ENCODE measurements at regions of chr9 and their contacts with region 1.

Region 1: DNA sequence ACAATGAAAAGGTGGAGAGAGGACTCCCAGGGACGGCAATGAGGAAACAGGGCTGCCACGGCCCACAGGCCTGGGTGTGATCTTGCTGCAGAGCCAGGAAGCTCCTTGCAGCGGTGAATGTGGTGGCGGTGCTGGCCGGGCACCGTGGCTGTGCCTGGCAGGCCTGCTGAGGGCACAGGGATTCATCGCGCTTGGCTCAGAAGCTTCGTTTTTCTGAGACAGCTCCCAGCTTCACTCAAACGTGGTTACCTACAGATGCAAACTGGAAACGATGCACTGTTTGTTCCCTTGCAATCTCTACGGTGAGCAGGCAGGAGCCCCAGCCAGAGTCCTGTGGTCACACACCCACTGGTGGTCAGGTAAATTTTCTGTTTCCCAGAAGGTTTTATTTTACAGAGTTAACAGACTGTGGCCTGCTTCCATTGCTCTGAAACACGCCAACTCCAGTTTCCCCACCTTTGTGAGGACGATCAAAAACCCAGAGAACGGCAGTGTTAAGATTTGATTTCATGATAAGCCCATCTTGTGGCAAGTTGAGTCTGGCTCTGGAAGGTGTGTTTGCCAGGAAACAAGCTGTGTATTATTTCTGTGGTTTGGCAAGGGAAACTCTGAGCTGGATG is 183.9 kb downstream of the AUH start:
- DNase-seq: peak; percentile 96
- H3K4me3 ChIP-seq: no peak overlapping the region
- H3K27ac ChIP-seq: peak overlapping the region; percentile 78
- H3K4me1 ChIP-seq: peaks cover 46% of the 10 kb centered on the region
- H3K27me3 ChIP-seq: no peaks in the 10 kb centered on the region
- CTCF ChIP-seq: no peak

Region 2: GRCh38 chr9:90985631-90986030 is 192.1 kb before region 1 on chr9:
- CTCF ChIA-PET with region 1: no interaction called
- dilution Hi-C with region 1: no loop called
- in situ Hi-C with region 1: no loop called
- intact Hi-C with region 1: loop called (anchors 5 kb)
- DNase-seq: peak; percentile 96
- H3K4me3 ChIP-seq: no peak overlapping the region
- H3K27ac ChIP-seq: peak overlapping the region; percentile 80
- H3K4me1 ChIP-seq: peaks cover 36% of the 10 kb centered on the region
- H3K27me3 ChIP-seq: no peaks in the 10 kb centered on the region
- CTCF ChIP-seq: no peak

Region 3: GRCh38 chr9:91131433-91131839 is 46.3 kb before region 1 on chr9:
- CTCF ChIA-PET with region 1: no interaction called
- dilution Hi-C with region 1: no loop called
- in situ Hi-C with region 1: no loop called
- intact Hi-C with region 1: loop called (anchors 5 kb)
- DNase-seq: peak; percentile 97
- H3K4me3 ChIP-seq: no peak overlapping the region
- H3K27ac ChIP-seq: peak overlapping the region; percentile 91
- H3K4me1 ChIP-seq: peaks cover 19% of the 10 kb centered on the region
- H3K27me3 ChIP-seq: no peaks in the 10 kb centered on the region
- CTCF ChIP-seq: no peak

Measured in mammary epithelial cell (primary cell).